Activated T-helper 1 cell treated with anti-CD3 and anti-CD28 coated beads, Interleukin-12 subunit alpha, Interleukin-12 subunit beta, Interleukin-2, Interleukin-4 antibody, amounts not matched to agents 30 ng/mL and 10 ng/mL and 1 ng/mL, durations not matched to agents 14 hours and 24 hours and 36 hours (primary cell): ENCODE measurements at regions of chr9 and their contacts with region 1.

Region 1: DNA sequence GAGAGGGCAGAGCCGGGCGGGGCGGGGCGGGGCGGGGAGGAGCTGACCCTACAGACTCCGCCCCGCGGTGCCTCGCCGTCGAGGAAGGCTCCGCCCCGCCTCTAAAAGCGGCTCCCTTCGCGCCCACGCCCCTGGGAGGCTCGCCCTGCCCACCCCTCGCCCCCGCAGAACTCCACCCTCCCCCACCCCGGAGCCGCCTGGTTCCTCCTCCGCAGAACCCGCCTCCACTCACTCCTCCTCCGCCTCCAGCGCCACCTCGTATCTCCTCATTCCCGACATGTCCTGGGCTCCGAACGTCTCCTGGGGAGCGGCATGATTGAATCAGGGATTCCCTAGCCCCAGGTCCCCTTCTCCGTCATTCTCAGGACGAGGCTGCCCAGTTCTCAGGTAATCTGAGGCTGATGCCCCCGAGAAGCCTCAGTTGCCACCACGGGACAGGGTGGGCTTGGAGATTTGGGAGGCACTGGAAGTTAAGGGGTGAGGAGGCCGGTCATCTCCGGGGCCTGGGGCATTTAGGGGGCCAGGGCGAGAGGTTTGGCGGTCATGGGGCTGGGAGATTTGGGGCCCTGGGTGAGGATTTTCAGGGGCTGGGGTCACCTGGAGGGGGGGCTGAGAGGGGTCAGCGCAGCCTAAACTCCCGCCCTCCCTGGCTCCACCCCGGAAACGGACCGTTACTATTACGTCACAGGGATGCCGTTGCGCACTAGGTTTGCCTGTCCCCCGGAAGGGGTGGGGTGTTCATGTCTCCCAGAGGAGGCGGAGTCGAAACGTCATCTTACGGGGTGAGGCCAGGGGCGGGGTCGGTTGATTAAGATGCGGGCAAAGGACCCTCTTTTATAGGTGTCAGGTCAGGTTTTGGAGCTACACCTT is 3.2 kb upstream of the CCL27 start:
- DNase-seq: peak; percentile 86
- H3K4me3 Mint-ChIP-seq: peak overlapping the region; percentile 88
- H3K27ac Mint-ChIP-seq: peak overlapping the region; percentile 84
- H3K4me1 Mint-ChIP-seq: peaks cover 31% of the 10 kb centered on the region
- H3K27me3 Mint-ChIP-seq: no peaks in the 10 kb centered on the region

Region 2: GRCh38 chr9:34178520-34179212 is 486.9 kb before region 1 on chr9 and contains the start of gene UBAP1:
- intact Hi-C with region 1: loop called (anchors 2 kb)
- DNase-seq: peak; percentile 95
- H3K4me3 Mint-ChIP-seq: peak within 1 kb of the TSS; percentile 92
- H3K27ac Mint-ChIP-seq: peak within 1 kb of the TSS; percentile 94
- H3K4me1 Mint-ChIP-seq: peaks cover 5% of the 10 kb centered on the region
- H3K27me3 Mint-ChIP-seq: no peaks in the 10 kb centered on the region
- total RNA-seq, gene UBAP1: 30.0 and 33.4 TPM in 2 replicates

Region 3: DNA sequence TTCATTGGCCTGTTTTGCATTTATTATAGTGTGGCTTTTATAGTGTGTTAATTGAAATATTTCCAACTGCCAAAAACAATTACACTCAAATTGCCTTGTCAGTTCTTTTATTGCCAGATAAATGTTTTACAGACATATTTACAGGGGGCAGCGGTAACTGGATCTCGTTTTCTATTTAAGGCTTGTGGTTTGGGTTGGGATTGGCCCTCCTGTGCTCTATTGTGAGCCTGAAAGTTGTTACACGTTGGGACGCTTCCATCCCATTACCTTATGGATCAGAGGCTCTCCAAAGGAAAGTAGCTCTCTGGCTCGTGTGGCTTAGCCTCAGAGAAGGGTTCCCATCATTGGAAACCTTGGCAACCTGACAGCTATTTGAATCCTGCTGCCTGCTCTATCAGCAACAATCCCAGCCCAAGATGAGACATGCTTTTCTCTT is 186.2 kb before region 1 on chr9:
- intact Hi-C with region 1: no loop called
- DNase-seq: no peak
- H3K4me3 Mint-ChIP-seq: no peak overlapping the region
- H3K27ac Mint-ChIP-seq: no peak overlapping the region
- H3K4me1 Mint-ChIP-seq: no peaks in the 10 kb centered on the region
- H3K27me3 Mint-ChIP-seq: peaks cover 4% of the 10 kb centered on the region

Region 4: GRCh38 chr9:34611829-34612630 is 53.6 kb before region 1 on chr9 and contains the start of gene RPP25L:
- intact Hi-C with region 1: loop called (anchors 1 kb)
- DNase-seq: peak; percentile 84
- H3K4me3 Mint-ChIP-seq: peak within 1 kb of the TSS; percentile 95
- H3K27ac Mint-ChIP-seq: peak within 1 kb of the TSS; percentile 96
- H3K4me1 Mint-ChIP-seq: peaks cover 24% of the 10 kb centered on the region
- H3K27me3 Mint-ChIP-seq: no peaks in the 10 kb centered on the region
- total RNA-seq, gene RPP25L: 37.5 and 40.2 TPM in 2 replicates

Region 5: DNA sequence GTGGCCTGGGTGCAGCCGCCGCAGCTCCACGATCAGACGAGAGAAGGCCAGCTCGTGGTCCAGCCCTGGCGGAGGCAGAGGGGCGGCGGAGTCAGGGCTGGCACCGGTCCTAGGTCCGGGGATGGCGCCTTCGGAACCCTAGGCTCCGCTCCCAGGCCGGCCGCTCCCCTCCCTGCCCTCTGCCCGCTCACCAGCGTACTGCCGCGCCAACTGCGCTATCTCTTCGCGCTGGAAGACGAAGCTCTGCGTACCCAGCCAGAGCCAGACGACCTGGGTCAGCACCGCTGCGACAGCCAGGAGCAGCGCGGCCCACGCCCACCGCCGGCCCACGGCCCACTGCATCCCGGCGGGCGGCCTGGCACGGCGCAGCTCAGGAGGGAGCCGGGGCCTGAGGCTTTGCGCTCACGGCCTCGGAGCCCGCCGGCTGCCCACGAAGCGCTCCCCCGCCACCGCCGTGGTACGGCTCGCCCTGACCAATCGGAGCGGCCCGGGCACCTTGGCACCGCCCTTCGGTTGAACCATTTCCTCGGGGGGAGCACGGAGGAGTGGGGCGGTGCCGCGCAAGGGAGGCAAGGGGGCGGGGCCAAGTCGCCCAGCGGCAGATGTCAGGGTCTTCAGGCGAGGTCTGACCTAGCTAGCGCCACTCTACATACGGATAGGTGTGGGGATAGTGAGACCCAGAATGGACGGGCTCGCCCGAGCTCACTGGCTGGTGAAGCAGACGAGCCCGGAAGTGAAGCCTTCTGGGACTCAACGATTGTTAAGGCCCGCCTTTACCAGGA is 28.1 kb before region 1 on chr9 and contains the start of gene SIGMAR1:
- intact Hi-C with region 1: loop called (anchors 1 kb)
- DNase-seq: peak; percentile 94
- H3K4me3 Mint-ChIP-seq: peak within 1 kb of the TSS; percentile 97
- H3K27ac Mint-ChIP-seq: peak within 1 kb of the TSS; percentile 88
- H3K4me1 Mint-ChIP-seq: peaks cover 39% of the 10 kb centered on the region
- H3K27me3 Mint-ChIP-seq: no peaks in the 10 kb centered on the region
- total RNA-seq, gene SIGMAR1: 128 and 130 TPM in 2 replicates

Region 6: GRCh38 chr9:34701769-34702736 is 36.4 kb after region 1 on chr9:
- intact Hi-C with region 1: loop called (anchors 1 kb)
- DNase-seq: peak; percentile 66
- H3K4me3 Mint-ChIP-seq: peak overlapping the region; percentile 82
- H3K27ac Mint-ChIP-seq: peak overlapping the region; percentile 68
- H3K4me1 Mint-ChIP-seq: peaks cover 6% of the 10 kb centered on the region
- H3K27me3 Mint-ChIP-seq: peaks cover 29% of the 10 kb centered on the region